MCF 10A (cell line): ENCODE measurements at regions of chr12 and their contacts with region 1.

Region 1: GRCh38 chr12:52495389-52495788 is 2.3 kb upstream of the KRT6A start:
- DNase-seq: peak; percentile 95
- H3K4me3 Mint-ChIP-seq: peak overlapping the region; percentile 93
- H3K27ac Mint-ChIP-seq: peak overlapping the region; percentile 95
- H3K4me1 Mint-ChIP-seq: peaks cover 64% of the 10 kb centered on the region
- H3K27me3 Mint-ChIP-seq: no peaks in the 10 kb centered on the region
- CTCF ChIP-seq: no peak

Region 2: DNA sequence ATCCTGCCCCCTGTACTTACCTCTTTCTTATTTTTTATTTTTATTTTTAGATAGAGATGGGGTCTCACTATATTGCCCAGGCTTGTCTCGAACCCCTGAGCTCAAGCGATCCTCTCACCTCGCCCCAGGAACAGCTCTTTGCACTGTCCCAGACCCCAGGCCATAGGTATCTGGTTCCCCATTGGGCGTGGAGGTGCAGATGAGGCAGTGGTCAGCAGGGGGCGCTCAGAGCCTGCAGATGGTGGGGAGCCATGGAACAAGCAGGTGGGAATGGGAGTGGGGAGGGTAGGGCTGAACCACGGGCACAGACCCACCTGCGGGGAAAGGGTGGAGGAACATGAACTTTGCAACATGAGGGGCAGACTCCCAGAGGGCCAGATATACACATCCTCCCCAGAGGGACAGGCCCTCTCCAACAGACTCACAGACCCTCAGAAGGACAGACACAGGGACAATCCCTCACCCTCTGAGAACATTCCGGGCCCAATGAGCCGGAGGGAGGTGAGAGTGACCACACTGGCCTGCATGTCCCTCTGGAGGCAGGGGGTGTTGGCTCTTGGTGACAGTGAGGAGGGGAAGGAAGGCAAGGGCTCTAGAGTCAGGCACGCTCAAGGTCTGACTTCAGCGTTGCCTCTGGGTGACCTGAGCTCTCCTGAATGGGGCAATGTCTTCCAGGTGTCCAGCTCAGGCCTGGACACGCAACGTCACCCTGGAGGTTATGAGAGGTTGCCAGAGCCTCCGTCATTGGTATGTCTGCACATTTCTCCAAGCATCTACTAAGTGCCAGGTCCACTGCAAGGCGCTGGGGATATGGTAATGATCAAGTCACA is 338.4 kb before region 1 on chr12:
- CTCF ChIA-PET with region 1: interaction called, 6 read pairs
- POLR2A ChIA-PET with region 1: interaction called, 100 read pairs
- intact Hi-C with region 1: no loop called
- DNase-seq: peak; percentile 85
- H3K4me3 Mint-ChIP-seq: no peak overlapping the region
- H3K27ac Mint-ChIP-seq: peak overlapping the region; percentile 91
- H3K4me1 Mint-ChIP-seq: peaks cover 30% of the 10 kb centered on the region
- H3K27me3 Mint-ChIP-seq: no peaks in the 10 kb centered on the region
- CTCF ChIP-seq: peak; percentile 98

Region 3: GRCh38 chr12:52338241-52338960 is 157.0 kb before region 1 on chr12:
- CTCF ChIA-PET with region 1: no interaction called
- POLR2A ChIA-PET with region 1: no interaction called
- intact Hi-C with region 1: no loop called
- DNase-seq: peak; percentile 81
- H3K4me3 Mint-ChIP-seq: peak overlapping the region; percentile 39
- H3K27ac Mint-ChIP-seq: peak overlapping the region; percentile 73
- H3K4me1 Mint-ChIP-seq: peaks cover 29% of the 10 kb centered on the region
- H3K27me3 Mint-ChIP-seq: no peaks in the 10 kb centered on the region
- CTCF ChIP-seq: no peak

Region 4: DNA sequence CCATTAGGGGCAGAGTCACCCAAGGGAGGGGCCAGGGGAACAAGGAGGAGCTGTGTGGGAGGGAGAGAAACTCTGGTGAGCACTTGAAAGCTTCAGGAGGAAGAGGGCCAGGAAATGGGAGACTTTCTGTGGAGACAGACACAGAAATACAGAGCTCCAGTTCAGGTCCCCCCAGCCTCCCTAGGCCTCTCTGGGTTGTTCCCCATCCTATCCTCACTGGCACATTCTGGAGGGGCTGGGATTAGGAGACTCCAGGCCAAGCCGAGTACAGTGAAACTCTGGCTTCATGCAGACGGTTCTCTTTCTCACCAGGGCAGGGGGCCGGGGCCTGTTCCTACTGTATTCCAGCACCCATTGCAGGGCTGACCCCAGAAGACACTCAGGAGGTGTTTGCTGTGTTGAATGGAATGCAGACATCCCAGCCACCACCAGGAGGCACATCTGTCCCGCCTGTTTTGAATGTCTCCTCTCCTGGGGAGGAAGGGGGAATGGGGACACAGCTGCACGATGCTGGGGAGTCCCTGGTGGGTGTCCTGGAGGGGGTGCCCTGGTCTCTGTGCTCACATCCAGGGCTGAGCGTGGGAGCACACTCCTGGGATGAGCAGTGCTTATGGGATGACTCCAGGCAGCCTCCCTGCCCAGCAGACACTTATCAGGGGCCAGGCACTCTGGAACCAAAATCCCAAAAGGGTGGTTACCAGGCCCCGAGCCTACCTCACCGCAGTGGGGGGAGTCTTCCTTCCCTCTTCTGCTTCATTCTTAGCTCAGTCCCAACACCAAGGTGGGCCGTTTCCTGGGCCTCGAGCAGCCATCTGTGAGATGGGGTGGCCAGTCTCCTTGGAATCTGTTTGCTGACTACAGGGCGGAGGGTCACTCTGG is 104.4 kb before region 1 on chr12:
- CTCF ChIA-PET with region 1: interaction called, 18 read pairs
- POLR2A ChIA-PET with region 1: interaction called, 24 read pairs
- intact Hi-C with region 1: no loop called
- DNase-seq: peak; percentile 67
- H3K4me3 Mint-ChIP-seq: no peak overlapping the region
- H3K27ac Mint-ChIP-seq: no peak overlapping the region
- H3K4me1 Mint-ChIP-seq: peaks cover 24% of the 10 kb centered on the region
- H3K27me3 Mint-ChIP-seq: no peaks in the 10 kb centered on the region
- CTCF ChIP-seq: peak; percentile 86

Region 5: GRCh38 chr12:52442600-52443061 is 52.8 kb before region 1 on chr12:
- CTCF ChIA-PET with region 1: interaction called, 5 read pairs
- POLR2A ChIA-PET with region 1: interaction called, 6 read pairs
- intact Hi-C with region 1: loop called (anchors 2 kb)
- DNase-seq: peak; percentile 98
- H3K4me3 Mint-ChIP-seq: no peak overlapping the region
- H3K27ac Mint-ChIP-seq: no peak overlapping the region
- H3K4me1 Mint-ChIP-seq: peaks cover 35% of the 10 kb centered on the region
- H3K27me3 Mint-ChIP-seq: no peaks in the 10 kb centered on the region
- CTCF ChIP-seq: no peak

Region 6: GRCh38 chr12:52473768-52474167 is 21.6 kb before region 1 on chr12 and contains the start of gene KRT6C:
- CTCF ChIA-PET with region 1: interaction called, 3 read pairs
- POLR2A ChIA-PET with region 1: interaction called, 10 read pairs
- intact Hi-C with region 1: no loop called
- DNase-seq: peak; percentile 43
- H3K4me3 Mint-ChIP-seq: no peak within 1 kb of the TSS
- H3K27ac Mint-ChIP-seq: no peak within 1 kb of the TSS
- H3K4me1 Mint-ChIP-seq: no peaks in the 10 kb centered on the region
- H3K27me3 Mint-ChIP-seq: no peaks in the 10 kb centered on the region
- CTCF ChIP-seq: no peak
- total RNA-seq, gene KRT6C: 0.19 and 0.44 TPM in 2 replicates

Region 7: GRCh38 chr12:52515927-52516831 is 20.8 kb after region 1 on chr12:
- CTCF ChIA-PET with region 1: interaction called, 24 read pairs
- POLR2A ChIA-PET with region 1: interaction called, 1,235 read pairs
- intact Hi-C with region 1: no loop called
- DNase-seq: peak; percentile 43
- H3K4me3 Mint-ChIP-seq: peak overlapping the region; percentile 80
- H3K27ac Mint-ChIP-seq: peak overlapping the region; percentile 12
- H3K4me1 Mint-ChIP-seq: peaks cover 30% of the 10 kb centered on the region
- H3K27me3 Mint-ChIP-seq: no peaks in the 10 kb centered on the region
- CTCF ChIP-seq: no peak

Region 8: GRCh38 chr12:52582971-52583456 is 87.6 kb after region 1 on chr12:
- CTCF ChIA-PET with region 1: interaction called, 4 read pairs
- POLR2A ChIA-PET with region 1: interaction called, 21 read pairs
- intact Hi-C with region 1: no loop called
- DNase-seq: peak; percentile 82
- H3K4me3 Mint-ChIP-seq: no peak overlapping the region
- H3K27ac Mint-ChIP-seq: no peak overlapping the region
- H3K4me1 Mint-ChIP-seq: peaks cover 26% of the 10 kb centered on the region
- H3K27me3 Mint-ChIP-seq: no peaks in the 10 kb centered on the region
- CTCF ChIP-seq: peak; percentile 76